Aorta (tissue), 5 donors: ENCODE measurements at regions of chr1 and their contacts with region 1.

Region 1: DNA sequence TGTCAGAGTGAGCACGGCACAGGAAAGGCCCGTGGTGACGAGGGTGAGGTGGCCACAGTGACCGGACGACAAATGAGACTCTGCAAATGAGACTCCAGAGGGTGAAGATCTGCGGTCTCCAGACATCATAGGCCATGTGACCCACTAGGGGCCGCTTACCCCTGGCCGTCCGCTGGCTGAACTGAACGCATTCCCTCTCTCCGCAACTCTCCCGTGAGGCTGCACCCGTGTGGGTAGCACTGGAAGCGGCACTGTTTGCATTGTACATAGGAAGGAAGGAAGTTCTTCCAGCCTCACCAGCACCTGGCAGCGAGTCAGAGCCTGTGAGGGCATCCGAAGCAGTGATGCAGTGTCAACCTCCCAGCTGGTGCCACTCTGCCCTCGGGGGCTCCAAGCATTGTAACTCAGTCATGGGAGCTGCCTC is 23.6 kb upstream of the SPSB1 start:
- DNase-seq: peak; percentile 24 to 73
- ATAC-seq: no peak
- H3K4me3 ChIP-seq: no peak overlapping the region
- H3K27ac ChIP-seq: no peak overlapping the region
- H3K4me1 ChIP-seq: no peaks in the 10 kb centered on the region
- H3K27me3 ChIP-seq: no peaks in the 10 kb centered on the region

Region 2: GRCh38 chr1:9455487-9456234 is 186.6 kb after region 1 on chr1:
- intact Hi-C with region 1: loop called in 1 of 2 experiments (anchors 2 kb)
- DNase-seq: peak; percentile 84 to 91
- ATAC-seq: peak; percentile 89
- H3K4me3 ChIP-seq: no peak overlapping the region
- H3K27ac ChIP-seq: no peak overlapping the region
- H3K4me1 ChIP-seq: no peaks in the 10 kb centered on the region
- H3K27me3 ChIP-seq: no peaks in the 10 kb centered on the region

Region 3: DNA sequence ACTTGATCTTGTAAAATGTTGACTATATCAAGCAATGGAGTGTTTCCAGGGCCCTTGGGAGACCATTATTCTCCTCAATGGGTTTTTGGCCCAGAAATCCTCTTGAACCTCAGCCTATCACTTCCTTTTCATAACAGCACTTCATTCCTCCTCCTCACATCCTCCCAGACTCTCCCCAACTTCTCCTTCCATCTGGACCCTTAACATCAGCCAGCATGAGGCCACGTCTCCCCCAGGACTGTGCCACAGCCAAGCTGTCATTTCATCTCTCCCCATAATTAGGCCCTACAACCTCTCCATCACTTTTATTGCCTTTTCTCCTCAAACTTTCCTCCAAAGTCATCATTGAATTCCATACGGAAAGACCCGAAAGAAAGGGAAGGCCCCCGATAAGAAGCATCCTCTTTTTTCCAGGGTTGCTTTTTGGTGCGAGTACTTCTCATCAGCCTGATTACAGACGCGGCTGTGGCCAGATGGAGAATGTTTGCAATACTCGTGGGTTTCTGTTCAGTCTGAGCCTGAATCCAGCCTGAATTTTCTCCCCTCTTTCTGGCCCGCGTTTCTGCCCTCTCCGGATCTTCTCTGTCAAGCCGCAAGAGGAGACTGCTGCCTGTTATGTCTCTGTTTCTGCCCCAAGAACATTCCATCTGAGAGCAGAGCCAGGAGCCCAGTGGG is 217.5 kb after region 1 on chr1:
- intact Hi-C with region 1: loop called (anchors 5 kb)
- DNase-seq: no peak
- ATAC-seq: no peak
- H3K4me3 ChIP-seq: no peak overlapping the region
- H3K27ac ChIP-seq: no peak overlapping the region
- H3K4me1 ChIP-seq: no peaks in the 10 kb centered on the region
- H3K27me3 ChIP-seq: no peaks in the 10 kb centered on the region

Region 4: DNA sequence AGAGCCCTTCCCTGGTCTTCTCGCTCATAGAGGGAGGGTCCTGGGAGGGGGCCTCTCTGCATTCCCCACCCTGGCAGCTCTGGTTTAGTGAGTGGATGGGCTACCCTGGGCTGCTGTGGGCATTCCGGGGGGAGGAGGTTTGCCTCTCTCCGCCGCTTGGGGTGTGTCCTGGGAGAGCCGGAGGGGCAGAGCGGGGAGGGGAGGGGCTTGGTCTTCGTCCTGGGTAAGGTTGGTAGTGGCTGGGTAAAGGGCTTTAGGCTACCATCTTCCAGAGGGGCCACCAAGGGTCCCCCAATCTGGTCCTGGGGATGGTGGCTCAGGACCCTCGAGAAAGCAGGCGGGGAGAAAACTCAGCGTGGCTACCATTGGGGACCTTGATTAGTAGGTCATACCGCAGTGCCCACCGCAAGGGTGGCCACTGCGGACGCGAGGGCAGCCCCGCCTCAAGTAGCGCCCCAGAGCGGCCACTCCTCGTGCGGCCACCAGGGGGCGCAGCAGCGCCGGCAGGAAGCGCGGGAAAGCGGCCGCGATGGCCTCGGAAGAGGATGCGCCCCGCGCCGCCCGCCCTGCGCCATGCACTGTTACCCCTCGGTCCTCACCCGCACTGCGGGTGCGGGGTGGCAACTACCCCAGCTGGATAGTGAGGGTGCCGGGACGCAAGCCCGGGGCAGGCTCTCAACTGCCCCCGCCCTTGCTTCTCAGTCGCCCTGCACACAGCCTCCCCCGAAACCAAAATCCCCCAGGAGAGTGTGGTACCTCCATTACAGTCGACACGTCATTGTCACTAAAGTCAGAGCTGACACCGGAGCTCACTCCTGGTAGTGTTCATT is 226.1 kb after region 1 on chr1:
- intact Hi-C with region 1: loop called in 1 of 2 experiments (anchors 5 kb)
- DNase-seq: peak; percentile 58 to 89
- ATAC-seq: peak; percentile 79
- H3K4me3 ChIP-seq: no peak overlapping the region
- H3K27ac ChIP-seq: no peak overlapping the region
- H3K4me1 ChIP-seq: no peaks in the 10 kb centered on the region
- H3K27me3 ChIP-seq: no peaks in the 10 kb centered on the region